Activated CD8-positive, alpha-beta T cell treated with anti-CD3 and anti-CD28 coated beads for 36 hours (primary cell): ENCODE measurements at regions of chrX and their contacts with region 1.

Region 1: GRCh38 chrX:100368167-100368566 is 41.9 kb downstream of the PCDH19 start:
- DNase-seq: peak; percentile 1
- ATAC-seq: no peak
- H3K4me3 Mint-ChIP-seq: no peak overlapping the region
- H3K27ac Mint-ChIP-seq: no peak overlapping the region
- H3K4me1 Mint-ChIP-seq: no peaks in the 10 kb centered on the region
- H3K27me3 Mint-ChIP-seq: no peaks in the 10 kb centered on the region
- CTCF ChIP-seq: no peak

Region 2: DNA sequence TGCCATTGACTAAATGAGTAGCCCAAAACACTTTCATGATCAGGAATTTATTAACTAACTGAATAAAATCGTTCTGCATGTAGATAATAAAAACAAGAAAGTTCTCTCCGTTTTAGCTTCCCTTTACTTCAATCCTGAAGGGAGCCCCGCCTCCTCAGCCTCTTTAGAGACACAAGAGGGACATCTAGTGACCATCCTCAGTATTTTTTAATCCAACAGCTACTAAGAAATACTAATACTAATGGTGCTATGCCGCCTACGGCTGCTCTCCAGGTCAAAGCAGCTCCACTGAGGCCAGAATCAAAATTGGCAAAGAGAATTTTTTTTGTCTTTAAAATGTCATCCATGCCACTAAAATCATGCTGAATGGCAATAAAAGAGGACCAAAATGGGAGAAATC is 45.1 kb after region 1 on chrX:
- CTCF ChIA-PET with region 1: interaction called, 22 read pairs
- POLR2A ChIA-PET with region 1: no interaction called
- intact Hi-C with region 1: no loop called
- DNase-seq: peak; percentile 31
- ATAC-seq: no peak
- H3K4me3 Mint-ChIP-seq: no peak overlapping the region
- H3K27ac Mint-ChIP-seq: no peak overlapping the region
- H3K4me1 Mint-ChIP-seq: peaks cover 3% of the 10 kb centered on the region
- H3K27me3 Mint-ChIP-seq: peaks cover 30% of the 10 kb centered on the region
- CTCF ChIP-seq: no peak